ENCODE measurements at regions of chr15 and their contacts with region 1.

Region 1: DNA sequence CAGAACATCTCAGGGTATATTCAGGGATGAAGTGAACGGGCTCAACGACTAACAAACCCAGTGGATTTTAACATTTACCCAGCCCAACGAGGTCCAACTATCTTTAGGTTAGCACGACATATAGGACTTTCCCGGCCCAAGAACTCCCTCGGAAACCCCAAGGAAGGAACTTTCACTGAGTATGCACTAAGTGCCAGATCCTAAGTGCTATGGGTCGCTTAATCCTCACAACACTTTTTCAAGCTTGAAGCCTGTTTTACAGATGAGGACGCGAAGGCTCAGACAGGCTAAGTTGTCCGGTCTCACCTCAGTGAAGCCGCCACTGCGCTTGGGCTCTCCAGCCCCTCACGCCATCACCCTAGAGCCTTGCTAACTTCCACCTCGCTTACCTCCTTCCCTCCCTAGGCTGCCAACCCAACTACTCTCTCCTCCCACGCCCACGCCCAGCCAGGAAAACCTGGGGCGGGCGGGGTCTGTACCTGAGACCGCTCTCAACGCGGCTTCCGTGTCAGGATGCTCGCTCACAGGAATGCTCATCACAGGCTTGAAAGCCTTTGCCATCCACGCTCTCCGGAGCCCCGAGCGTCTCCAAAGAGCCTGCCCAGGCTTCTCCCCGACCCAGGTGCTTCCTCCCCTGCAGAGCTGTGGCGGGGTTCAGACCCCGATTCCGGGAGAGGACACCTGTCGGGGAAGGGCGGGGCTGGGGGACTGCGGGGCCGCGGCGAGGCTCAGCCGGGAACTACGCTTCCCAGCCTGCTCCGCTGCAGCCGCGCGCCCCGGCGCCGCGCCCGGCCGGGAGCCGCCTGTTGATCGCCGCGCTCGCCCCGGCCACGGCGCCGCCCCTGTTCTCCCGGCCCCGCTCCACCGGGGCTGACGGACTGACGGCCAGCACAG is at the start of gene TMOD2:
- DNase-seq: peak; percentile 37 to 77 (median 58)
- ATAC-seq: peak; percentile 59 to 97 (median 92)
- H3K4me3 ChIP-seq: peak within 1 kb of the TSS; percentile 53 to 96 (median 76)
- H3K27ac ChIP-seq: peak within 1 kb of the TSS in 10 of 12 donors; percentile 32 to 78 (median 54)
- H3K4me1 ChIP-seq: peaks cover 0 to 41% (median 11%) of the 10 kb centered on the region in 12 donors
- H3K27me3 ChIP-seq: peaks cover 0 to 5% (median 0%) of the 10 kb centered on the region in 9 donors
- CTCF ChIP-seq: no peak
- POLR2A ChIP-seq: no peak
- total RNA-seq, gene TMOD2: 1.8 to 10.9 (median 6.4) TPM

Region 2: GRCh38 chr15:51681303-51681963 is 69.6 kb before region 1 on chr15 and contains the start of gene SCG3:
- intact Hi-C with region 1: loop called in 1 of 10 experiments (anchors 10 kb)
- DNase-seq: peak; percentile 73 to 87 (median 80)
- ATAC-seq: peak; percentile 67 to 97 (median 94)
- H3K4me3 ChIP-seq: peak within 1 kb of the TSS in 4 of 12 donors; percentile 5 to 19 (median 12)
- H3K27ac ChIP-seq: no peak within 1 kb of the TSS
- H3K4me1 ChIP-seq: peaks cover 0 to 10% (median 0%) of the 10 kb centered on the region in 12 donors
- H3K27me3 ChIP-seq: peaks cover 0 to 41% (median 0%) of the 10 kb centered on the region in 9 donors
- CTCF ChIP-seq: no peak
- POLR2A ChIP-seq: no peak
- total RNA-seq, gene SCG3: 0.10 to 0.11 TPM in 2 of 9 donors, not detected in the others

Region 3: GRCh38 chr15:51718219-51718618 is 32.8 kb before region 1 on chr15:
- intact Hi-C with region 1: loop called in 1 of 10 experiments (anchors 5 kb)
- DNase-seq: no peak
- ATAC-seq: no peak
- H3K4me3 ChIP-seq: no peak overlapping the region
- H3K27ac ChIP-seq: no peak overlapping the region
- H3K4me1 ChIP-seq: peaks cover 0 to 14% (median 5%) of the 10 kb centered on the region in 12 donors
- H3K27me3 ChIP-seq: no peaks in the 10 kb centered on the region
- CTCF ChIP-seq: no peak
- POLR2A ChIP-seq: no peak

Measured in heart left ventricle (tissue), 16 donors.